ENCODE measurements at regions of chr11 and their contacts with region 1.

Region 1: DNA sequence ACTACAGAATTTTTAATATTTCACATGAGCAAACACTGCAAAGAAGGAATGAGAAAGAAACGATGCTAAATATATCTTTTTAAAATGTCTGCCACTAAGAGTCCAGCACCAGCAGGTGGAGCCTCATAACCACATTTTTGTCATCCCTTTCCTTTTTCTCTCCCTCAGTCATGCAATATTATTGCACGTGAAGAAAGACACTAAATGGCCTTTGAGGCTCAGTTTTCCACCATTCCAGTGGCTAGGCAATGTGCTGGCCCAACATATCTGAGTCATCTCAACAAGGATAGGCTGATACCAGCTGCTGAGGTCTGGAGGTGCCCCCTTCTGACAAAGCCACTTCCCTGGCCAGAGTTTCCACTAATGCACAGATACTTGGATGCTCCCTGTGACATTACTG is 1.8 kb downstream of the ALKBH8 start:
- DNase-seq: peak; percentile 48
- H3K4me3 ChIP-seq: no peak overlapping the region
- H3K27ac ChIP-seq: peak overlapping the region; percentile 73
- H3K4me1 ChIP-seq: peaks cover 36% of the 10 kb centered on the region
- H3K27me3 ChIP-seq: no peaks in the 10 kb centered on the region
- CTCF ChIP-seq: peak; percentile 41 to 69

Region 2: GRCh38 chr11:107408762-107409211 is 154.9 kb before region 1 on chr11:
- CTCF ChIA-PET with region 1: no interaction called
- dilution Hi-C with region 1: no loop called
- in situ Hi-C with region 1: no loop called
- intact Hi-C with region 1: no loop called
- DNase-seq: no peak
- H3K4me3 ChIP-seq: no peak overlapping the region
- H3K27ac ChIP-seq: no peak overlapping the region
- H3K4me1 ChIP-seq: no peaks in the 10 kb centered on the region
- H3K27me3 ChIP-seq: no peaks in the 10 kb centered on the region
- CTCF ChIP-seq: no peak

Region 3: DNA sequence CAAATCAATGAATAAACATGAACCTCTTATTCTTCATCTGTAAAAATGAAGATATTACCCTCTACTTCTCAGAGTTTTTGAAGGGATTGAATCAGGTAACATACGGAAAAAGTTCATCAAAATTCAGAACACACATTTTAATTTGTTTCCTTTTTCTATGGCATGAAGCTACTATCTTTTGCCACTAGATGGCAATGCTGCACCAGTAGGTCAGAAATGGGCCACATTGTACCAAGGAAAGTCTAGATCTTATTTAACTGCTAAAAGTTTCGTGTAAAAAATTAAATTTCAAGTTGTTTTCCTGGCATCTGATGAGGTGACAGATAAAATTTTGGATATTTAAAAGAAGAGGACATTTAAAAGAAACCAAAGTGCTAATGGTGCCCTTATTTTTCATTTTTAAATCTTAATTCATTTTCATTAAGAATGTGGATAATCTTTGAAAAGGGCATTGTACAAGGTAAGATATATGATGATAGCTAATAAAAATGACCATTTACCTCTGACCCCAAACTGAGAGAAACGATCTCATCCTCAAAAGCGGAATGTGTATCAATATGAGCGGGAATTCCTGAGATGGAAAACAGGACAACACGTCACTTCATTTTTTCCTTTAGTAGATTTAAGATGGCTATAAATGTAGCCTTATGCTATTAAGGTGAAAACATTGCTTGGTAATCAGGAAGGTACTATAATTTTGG is 14.3 kb before region 1 on chr11:
- CTCF ChIA-PET with region 1: interaction called, 3 read pairs
- dilution Hi-C with region 1: no loop called
- in situ Hi-C with region 1: no loop called
- intact Hi-C with region 1: loop called (anchors 2 kb)
- DNase-seq: peak; percentile 27
- H3K4me3 ChIP-seq: no peak overlapping the region
- H3K27ac ChIP-seq: no peak overlapping the region
- H3K4me1 ChIP-seq: peaks cover 16% of the 10 kb centered on the region
- H3K27me3 ChIP-seq: no peaks in the 10 kb centered on the region
- CTCF ChIP-seq: peak; percentile 84 to 85

Region 4: DNA sequence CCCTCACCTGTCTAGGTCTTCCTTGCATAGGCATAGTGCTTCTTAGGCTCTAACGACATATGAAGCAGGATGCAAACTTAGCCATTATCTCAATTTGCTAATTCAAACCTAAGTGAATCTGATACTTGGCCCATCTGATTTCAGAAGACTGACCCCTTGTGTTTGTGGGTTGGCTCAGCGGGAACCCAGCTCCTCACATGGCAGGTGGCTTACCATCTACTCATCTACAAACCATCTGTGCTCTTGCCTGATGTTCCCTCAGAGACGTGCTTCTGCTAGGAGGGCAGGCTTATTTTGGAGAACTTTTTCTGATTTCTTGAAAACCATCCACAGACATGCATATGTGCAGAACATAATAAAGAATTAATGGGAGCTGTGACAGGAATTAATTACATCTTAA is 42.4 kb after region 1 on chr11:
- CTCF ChIA-PET with region 1: no interaction called
- dilution Hi-C with region 1: no loop called
- in situ Hi-C with region 1: no loop called
- intact Hi-C with region 1: loop called (anchors 5 kb)
- DNase-seq: no peak
- H3K4me3 ChIP-seq: no peak overlapping the region
- H3K27ac ChIP-seq: no peak overlapping the region
- H3K4me1 ChIP-seq: no peaks in the 10 kb centered on the region
- H3K27me3 ChIP-seq: peaks cover 7% of the 10 kb centered on the region
- CTCF ChIP-seq: peak in 1 of 2 donors; percentile 9

Region 5: GRCh38 chr11:107689317-107690202 is 125.9 kb after region 1 on chr11:
- CTCF ChIA-PET with region 1: interaction called, 8 read pairs
- dilution Hi-C with region 1: no loop called
- in situ Hi-C with region 1: no loop called
- intact Hi-C with region 1: loop called (anchors 1 kb)
- DNase-seq: peak; percentile 34
- H3K4me3 ChIP-seq: no peak overlapping the region
- H3K27ac ChIP-seq: no peak overlapping the region
- H3K4me1 ChIP-seq: no peaks in the 10 kb centered on the region
- H3K27me3 ChIP-seq: no peaks in the 10 kb centered on the region
- CTCF ChIP-seq: peak; percentile 28 to 72

Region 6: DNA sequence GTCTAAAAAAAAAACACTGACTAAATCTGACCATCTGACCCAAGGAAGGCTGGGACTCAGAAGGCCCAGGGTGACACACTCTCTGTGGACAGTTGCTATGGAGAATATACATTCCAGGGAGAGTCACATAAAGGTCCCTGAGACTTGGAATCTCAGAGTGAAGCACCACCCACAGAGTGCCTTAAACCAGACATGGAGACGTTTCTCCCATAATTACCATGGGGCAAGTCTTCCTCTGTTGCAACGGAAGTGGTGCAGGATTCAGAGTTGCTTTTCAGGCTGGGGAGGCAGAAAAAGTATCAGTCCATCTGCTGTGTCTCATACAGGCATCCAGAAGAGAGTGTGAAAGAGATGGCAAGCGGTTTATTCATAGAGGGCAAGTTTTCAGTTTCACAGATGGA is 206.8 kb after region 1 on chr11:
- CTCF ChIA-PET with region 1: no interaction called
- dilution Hi-C with region 1: no loop called
- in situ Hi-C with region 1: no loop called
- intact Hi-C with region 1: loop called (anchors 1 kb)
- DNase-seq: no peak
- H3K4me3 ChIP-seq: no peak overlapping the region
- H3K27ac ChIP-seq: no peak overlapping the region
- H3K4me1 ChIP-seq: no peaks in the 10 kb centered on the region
- H3K27me3 ChIP-seq: no peaks in the 10 kb centered on the region
- CTCF ChIP-seq: no peak

Region 7: GRCh38 chr11:107840129-107840484 is 276.4 kb after region 1 on chr11:
- CTCF ChIA-PET with region 1: no interaction called
- dilution Hi-C with region 1: no loop called
- in situ Hi-C with region 1: no loop called
- intact Hi-C with region 1: loop called (anchors 5 kb)
- DNase-seq: no peak
- H3K4me3 ChIP-seq: peak overlapping the region in 2 of 3 experiments; percentile 0 to 7
- H3K27ac ChIP-seq: peak overlapping the region; percentile 82
- H3K4me1 ChIP-seq: peaks cover 43% of the 10 kb centered on the region
- H3K27me3 ChIP-seq: no peaks in the 10 kb centered on the region
- CTCF ChIP-seq: no peak

Measured in mammary epithelial cell (primary cell).